ENCODE measurements at regions of chr2 and their contacts with region 1.

Region 1: GRCh38 chr2:112726497-112727190 is 5.8 kb downstream of the NT5DC4 start:
- DNase-seq: peak; percentile 86
- H3K4me3 ChIP-seq: no peak overlapping the region
- H3K27ac ChIP-seq: no peak overlapping the region
- H3K4me1 ChIP-seq: peaks cover 3% of the 10 kb centered on the region
- H3K27me3 ChIP-seq: no peaks in the 10 kb centered on the region
- CTCF ChIP-seq: peak; percentile 95 to 97
- POLR2A ChIP-seq: no peak

Region 2: GRCh38 chr2:112481050-112481527 is 245.6 kb before region 1 on chr2:
- CTCF ChIA-PET with region 1: interaction called, 9 read pairs
- POLR2A ChIA-PET with region 1: no interaction called
- dilution Hi-C with region 1: no loop called
- intact Hi-C with region 1: loop called (anchors 1 kb)
- DNase-seq: peak; percentile 85
- H3K4me3 ChIP-seq: peak overlapping the region; percentile 49 to 90 (median 61)
- H3K27ac ChIP-seq: peak overlapping the region; percentile 45
- H3K4me1 ChIP-seq: peaks cover 10% of the 10 kb centered on the region
- H3K27me3 ChIP-seq: no peaks in the 10 kb centered on the region
- CTCF ChIP-seq: peak; percentile 80 to 92
- POLR2A ChIP-seq: no peak

Region 3: DNA sequence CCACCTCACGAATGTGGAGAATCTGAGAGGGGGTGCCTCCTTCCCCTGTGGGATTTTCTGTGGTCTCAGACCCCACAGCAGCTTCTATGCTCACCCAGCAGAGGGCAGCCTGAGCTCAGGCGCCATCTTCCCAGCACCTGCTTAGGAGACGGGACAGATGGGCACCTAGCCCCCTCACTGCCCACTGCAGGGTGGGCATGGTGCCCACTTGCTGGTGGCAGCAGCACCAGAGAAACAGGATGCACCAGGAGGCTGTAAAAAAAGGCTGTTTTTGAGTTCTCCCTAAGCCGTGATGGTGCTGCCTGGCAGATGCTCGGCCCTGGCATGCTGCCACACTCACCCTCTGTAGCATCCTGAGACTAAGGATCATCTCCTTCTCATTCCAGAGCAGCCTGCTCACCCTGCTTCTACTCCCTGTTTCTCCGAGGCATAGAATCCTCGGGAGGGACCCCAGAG is 100.0 kb before region 1 on chr2:
- CTCF ChIA-PET with region 1: interaction called, 171 read pairs
- POLR2A ChIA-PET with region 1: no interaction called
- dilution Hi-C with region 1: no loop called
- intact Hi-C with region 1: loop called (anchors 1 kb)
- DNase-seq: peak; percentile 86
- H3K4me3 ChIP-seq: peak overlapping the region in 1 of 3 experiments; percentile 14
- H3K27ac ChIP-seq: peak overlapping the region; percentile 91
- H3K4me1 ChIP-seq: peaks cover 73% of the 10 kb centered on the region
- H3K27me3 ChIP-seq: no peaks in the 10 kb centered on the region
- CTCF ChIP-seq: peak; percentile 93
- POLR2A ChIP-seq: no peak

Region 4: DNA sequence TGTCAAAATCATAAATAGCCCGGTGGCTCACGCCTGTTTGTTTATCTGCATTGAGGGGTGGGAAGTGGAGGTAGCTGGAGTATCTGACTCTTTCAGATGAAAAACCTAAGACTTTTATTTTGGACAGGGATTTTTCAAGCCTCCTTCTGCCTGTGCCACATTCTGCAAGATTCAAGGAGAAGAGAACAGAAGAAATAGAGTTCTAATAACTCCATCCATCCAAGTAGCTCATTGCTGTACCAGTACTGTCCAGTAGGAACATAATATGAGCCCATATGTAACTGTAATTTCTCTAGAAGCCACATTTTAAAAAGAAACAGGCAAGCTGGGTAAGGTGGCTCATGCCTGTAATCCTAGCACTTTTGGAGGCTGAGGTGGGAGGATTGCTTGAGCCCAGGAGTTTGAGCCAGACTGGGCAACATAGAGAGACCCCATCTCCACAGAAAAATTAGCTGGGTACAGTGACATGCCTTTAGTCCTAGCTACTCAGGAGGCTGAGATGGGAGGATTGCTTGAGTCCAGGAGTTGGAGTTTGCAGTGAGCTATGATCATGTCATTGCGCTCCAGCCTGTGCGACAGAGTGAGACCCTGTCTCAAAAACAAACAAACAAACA is 41.3 kb before region 1 on chr2:
- CTCF ChIA-PET with region 1: interaction called, 59 read pairs
- POLR2A ChIA-PET with region 1: no interaction called
- dilution Hi-C with region 1: no loop called
- intact Hi-C with region 1: loop called (anchors 2 kb)
- DNase-seq: no peak
- H3K4me3 ChIP-seq: no peak overlapping the region
- H3K27ac ChIP-seq: no peak overlapping the region
- H3K4me1 ChIP-seq: peaks cover 27% of the 10 kb centered on the region
- H3K27me3 ChIP-seq: no peaks in the 10 kb centered on the region
- CTCF ChIP-seq: peak in 1 of 2 donors; percentile 16
- POLR2A ChIP-seq: no peak

Region 5: GRCh38 chr2:112737542-112738232 is 11.0 kb after region 1 on chr2:
- CTCF ChIA-PET with region 1: interaction called, 20 read pairs
- POLR2A ChIA-PET with region 1: no interaction called
- dilution Hi-C with region 1: no loop called
- intact Hi-C with region 1: no loop called
- DNase-seq: no peak
- H3K4me3 ChIP-seq: no peak overlapping the region
- H3K27ac ChIP-seq: no peak overlapping the region
- H3K4me1 ChIP-seq: no peaks in the 10 kb centered on the region
- H3K27me3 ChIP-seq: no peaks in the 10 kb centered on the region
- CTCF ChIP-seq: no peak
- POLR2A ChIP-seq: no peak